ENCODE measurements at regions of chr11 and their contacts with region 1.

Region 1: DNA sequence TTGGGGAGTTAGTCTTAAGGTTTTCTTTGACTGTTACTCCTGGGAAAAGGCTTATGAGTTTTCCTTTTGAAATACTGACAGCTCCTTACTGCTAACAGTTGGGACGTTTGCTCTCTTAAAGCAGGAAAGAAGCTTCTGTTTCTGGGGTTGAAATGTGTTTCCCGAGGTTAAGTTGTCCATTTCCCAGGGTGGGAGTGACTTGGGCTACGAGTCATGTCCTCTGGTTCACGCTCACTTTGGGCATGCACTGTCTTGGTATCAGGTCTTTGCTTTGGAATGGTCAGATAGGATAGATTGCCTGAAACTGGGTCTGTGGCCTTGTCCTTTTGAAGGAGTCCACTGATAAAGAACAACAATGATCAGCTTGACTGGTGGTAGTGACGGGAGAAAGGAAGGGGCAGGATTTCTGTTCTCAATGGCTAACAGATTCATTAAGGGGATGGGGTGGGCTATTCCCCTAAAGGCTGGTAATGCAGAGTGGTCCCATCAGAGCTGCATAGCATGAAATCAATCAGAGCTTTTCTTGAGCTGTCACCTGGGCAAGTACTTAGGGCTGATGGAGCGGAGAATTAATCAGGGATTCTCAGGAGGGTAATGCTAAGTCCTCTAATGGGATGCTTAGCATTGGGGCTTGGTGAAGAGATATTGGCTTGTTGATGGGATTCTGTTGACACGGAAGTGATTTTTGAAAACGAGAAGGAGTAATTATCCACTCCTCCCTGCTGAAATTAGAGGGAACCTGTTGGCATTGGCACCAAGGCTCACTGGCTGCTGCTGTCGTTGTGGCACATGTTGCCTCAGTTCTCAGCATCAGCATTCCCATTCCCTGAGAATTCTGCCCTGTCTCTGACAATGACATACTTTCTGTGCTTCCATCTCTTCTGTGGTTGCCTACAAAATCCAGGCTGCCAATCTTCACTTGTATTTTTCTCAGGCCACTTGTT is 81.6 kb downstream of the TEAD1 start:
- DNase-seq: no peak
- ATAC-seq: no peak
- H3K4me3 ChIP-seq: no peak overlapping the region
- H3K27ac ChIP-seq: no peak overlapping the region
- H3K4me1 ChIP-seq: peaks cover 45 to 48% of the 10 kb centered on the region in 2 experiments
- H3K27me3 ChIP-seq: no peaks in the 10 kb centered on the region
- CTCF ChIP-seq: no peak
- POLR2A ChIP-seq: no peak
- RAD21 ChIP-seq: no peak

Region 2: DNA sequence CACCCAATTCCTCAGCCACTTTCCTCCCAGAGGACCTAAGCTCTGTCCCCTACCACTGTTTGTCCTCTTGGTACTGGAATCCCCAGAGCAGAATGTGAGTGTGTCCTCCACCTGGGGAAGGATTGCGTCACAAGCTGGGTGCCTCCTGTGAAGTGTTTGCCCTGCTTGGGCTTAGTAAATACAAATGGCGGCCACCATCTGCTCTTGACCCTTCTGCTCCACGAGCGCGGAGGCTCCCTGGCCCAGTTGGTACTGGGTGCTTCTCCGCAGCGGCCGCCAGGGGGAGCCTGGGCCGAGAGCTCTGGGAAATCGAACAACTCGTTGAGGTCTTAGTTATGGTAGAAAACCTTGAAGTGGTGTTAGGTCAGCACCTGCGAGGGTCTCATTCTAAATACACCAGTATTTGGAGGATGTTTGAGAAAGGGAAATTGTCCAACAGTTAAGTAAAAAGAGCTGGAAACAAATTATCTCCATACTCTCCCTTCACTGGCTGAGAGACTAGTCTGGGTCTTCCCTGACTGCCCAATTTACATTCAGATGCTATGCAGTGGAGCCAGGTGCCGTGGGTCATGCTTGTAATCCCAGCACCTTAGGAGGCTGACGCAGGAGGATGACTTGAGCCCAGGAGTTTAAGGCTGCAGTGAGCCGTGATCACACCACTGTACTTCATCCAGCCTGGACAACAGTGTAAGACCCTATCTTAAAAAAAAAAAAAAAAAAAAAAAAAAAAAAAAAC is 156.2 kb before region 1 on chr11:
- CTCF ChIA-PET with region 1: no interaction called
- POLR2A ChIA-PET with region 1: no interaction called
- RAD21 ChIA-PET with region 1: no interaction called
- intact Hi-C with region 1: loop called (anchors 10 kb)
- DNase-seq: peak; percentile 40
- ATAC-seq: peak; percentile 96
- H3K4me3 ChIP-seq: no peak overlapping the region
- H3K27ac ChIP-seq: no peak overlapping the region
- H3K4me1 ChIP-seq: peaks cover 5 to 14% of the 10 kb centered on the region in 2 experiments; a peak in 2 of 4 replicates
- H3K27me3 ChIP-seq: no peaks in the 10 kb centered on the region
- CTCF ChIP-seq: peak; percentile 76 to 92 (median 92)
- POLR2A ChIP-seq: no peak
- RAD21 ChIP-seq: peak; percentile 84

Region 3: GRCh38 chr11:12802418-12803085 is 46.8 kb after region 1 on chr11:
- CTCF ChIA-PET with region 1: no interaction called
- POLR2A ChIA-PET with region 1: no interaction called
- RAD21 ChIA-PET with region 1: no interaction called
- intact Hi-C with region 1: no loop called
- DNase-seq: peak; percentile 97
- ATAC-seq: peak; percentile 79
- H3K4me3 ChIP-seq: peak overlapping the region; percentile 4 to 33
- H3K27ac ChIP-seq: peak overlapping the region; percentile 88
- H3K4me1 ChIP-seq: peaks cover 91 to 98% of the 10 kb centered on the region in 2 experiments
- H3K27me3 ChIP-seq: no peaks in the 10 kb centered on the region
- CTCF ChIP-seq: no peak
- POLR2A ChIP-seq: no peak
- RAD21 ChIP-seq: peak; percentile 39

Measured in HCT116 (cell line).